Endothelial cell of umbilical vein (primary cell): ENCODE measurements at regions of chr22 and their contacts with region 1.

Region 1: GRCh38 chr22:41022470-41023298 is 69.7 kb upstream of the EP300 start:
- DNase-seq: peak; percentile 67
- H3K4me3 ChIP-seq: peak overlapping the region; percentile 35 to 64 (median 59)
- H3K27ac ChIP-seq: peak overlapping the region; percentile 32
- H3K4me1 ChIP-seq: peaks cover 11% of the 10 kb centered on the region
- H3K27me3 ChIP-seq: no peaks in the 10 kb centered on the region
- CTCF ChIP-seq: no peak
- POLR2A ChIP-seq: no peak

Region 2: DNA sequence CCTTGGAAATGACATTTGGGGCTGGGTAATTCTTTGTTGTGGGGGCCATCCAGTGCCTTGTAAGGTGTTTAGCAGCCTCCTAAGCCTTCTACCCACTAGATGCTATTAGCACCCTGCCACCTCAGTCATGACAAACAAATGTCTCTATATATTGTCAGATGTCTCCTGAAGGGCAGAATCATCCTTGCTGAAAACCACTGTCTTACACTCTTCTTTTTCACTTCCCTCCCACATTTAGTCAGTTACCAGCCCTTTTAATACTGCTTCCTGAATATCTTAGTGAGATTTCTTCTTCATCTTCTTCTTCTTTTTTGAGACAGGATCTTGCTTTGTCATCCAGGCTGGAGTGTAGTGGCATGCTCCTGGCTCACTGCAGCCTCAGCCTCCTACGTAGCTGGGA is 811.9 kb before region 1 on chr22:
- CTCF ChIA-PET with region 1: no interaction called
- POLR2A ChIA-PET with region 1: no interaction called
- dilution Hi-C with region 1: no loop called
- intact Hi-C with region 1: no loop called
- DNase-seq: no peak
- H3K4me3 ChIP-seq: no peak overlapping the region
- H3K27ac ChIP-seq: no peak overlapping the region
- H3K4me1 ChIP-seq: peaks cover 24% of the 10 kb centered on the region
- H3K27me3 ChIP-seq: no peaks in the 10 kb centered on the region
- CTCF ChIP-seq: no peak
- POLR2A ChIP-seq: no peak

Region 3: DNA sequence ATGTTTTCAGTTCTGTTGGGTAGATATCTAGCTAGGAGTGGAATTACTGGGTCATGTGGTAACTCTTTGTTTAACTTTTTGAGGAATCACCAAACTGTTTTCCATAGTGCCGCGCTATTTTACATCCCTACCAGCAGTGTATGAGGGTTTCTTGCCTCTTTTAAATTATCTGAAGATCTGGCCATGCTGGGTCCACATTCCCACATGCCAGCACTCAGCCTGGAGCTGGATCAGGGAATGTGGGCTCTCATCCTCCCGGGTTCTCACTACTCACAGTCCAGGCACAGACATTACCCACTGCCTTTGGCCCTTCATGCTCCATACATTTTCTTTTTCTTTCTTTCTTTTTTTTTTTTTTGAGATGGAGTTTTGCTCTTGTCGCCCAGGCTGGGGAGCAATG is 26.8 kb before region 1 on chr22:
- CTCF ChIA-PET with region 1: no interaction called
- POLR2A ChIA-PET with region 1: no interaction called
- dilution Hi-C with region 1: no loop called
- intact Hi-C with region 1: no loop called
- DNase-seq: no peak
- H3K4me3 ChIP-seq: no peak overlapping the region
- H3K27ac ChIP-seq: no peak overlapping the region
- H3K4me1 ChIP-seq: no peaks in the 10 kb centered on the region
- H3K27me3 ChIP-seq: peaks cover 0 to 11% of the 10 kb centered on the region in 2 experiments
- CTCF ChIP-seq: no peak
- POLR2A ChIP-seq: no peak

Region 4: GRCh38 chr22:41009202-41009943 is 13.3 kb before region 1 on chr22:
- CTCF ChIA-PET with region 1: no interaction called
- POLR2A ChIA-PET with region 1: interaction called, 10 read pairs
- dilution Hi-C with region 1: no loop called
- intact Hi-C with region 1: no loop called
- DNase-seq: no peak
- H3K4me3 ChIP-seq: no peak overlapping the region
- H3K27ac ChIP-seq: no peak overlapping the region
- H3K4me1 ChIP-seq: no peaks in the 10 kb centered on the region
- H3K27me3 ChIP-seq: no peaks in the 10 kb centered on the region
- CTCF ChIP-seq: no peak
- POLR2A ChIP-seq: no peak

Region 5: GRCh38 chr22:41091132-41092022 is 68.7 kb after region 1 on chr22:
- CTCF ChIA-PET with region 1: no interaction called
- POLR2A ChIA-PET with region 1: no interaction called
- dilution Hi-C with region 1: no loop called
- intact Hi-C with region 1: loop called (anchors 5 kb)
- DNase-seq: peak; percentile 99
- H3K4me3 ChIP-seq: peak overlapping the region; percentile 99 to 100 (median 100)
- H3K27ac ChIP-seq: peak overlapping the region; percentile 98
- H3K4me1 ChIP-seq: peaks cover 25% of the 10 kb centered on the region
- H3K27me3 ChIP-seq: no peaks in the 10 kb centered on the region
- CTCF ChIP-seq: no peak
- POLR2A ChIP-seq: peak; percentile 74